Caco-2 (cell line): ENCODE measurements at regions of chr17 and their contacts with region 1.

Region 1: GRCh38 chr17:16363749-16364536 is 10.7 kb upstream of the CENPV start:
- DNase-seq: peak; percentile 75 to 76
- H3K4me3 ChIP-seq: no peak overlapping the region
- H3K4me3 Mint-ChIP-seq: no peak overlapping the region
- H3K27ac Mint-ChIP-seq: no peak overlapping the region
- H3K4me1 ChIP-seq: 0 out of 2 replicates have a peak, but pooled peaks cover 4% of the 10 kb centered on the region
- H3K4me1 Mint-ChIP-seq: no peaks in the 10 kb centered on the region
- H3K27me3 ChIP-seq: no peaks in the 10 kb centered on the region
- H3K27me3 Mint-ChIP-seq: no peaks in the 10 kb centered on the region
- CTCF ChIP-seq: peak; percentile 93 to 95

Region 2: DNA sequence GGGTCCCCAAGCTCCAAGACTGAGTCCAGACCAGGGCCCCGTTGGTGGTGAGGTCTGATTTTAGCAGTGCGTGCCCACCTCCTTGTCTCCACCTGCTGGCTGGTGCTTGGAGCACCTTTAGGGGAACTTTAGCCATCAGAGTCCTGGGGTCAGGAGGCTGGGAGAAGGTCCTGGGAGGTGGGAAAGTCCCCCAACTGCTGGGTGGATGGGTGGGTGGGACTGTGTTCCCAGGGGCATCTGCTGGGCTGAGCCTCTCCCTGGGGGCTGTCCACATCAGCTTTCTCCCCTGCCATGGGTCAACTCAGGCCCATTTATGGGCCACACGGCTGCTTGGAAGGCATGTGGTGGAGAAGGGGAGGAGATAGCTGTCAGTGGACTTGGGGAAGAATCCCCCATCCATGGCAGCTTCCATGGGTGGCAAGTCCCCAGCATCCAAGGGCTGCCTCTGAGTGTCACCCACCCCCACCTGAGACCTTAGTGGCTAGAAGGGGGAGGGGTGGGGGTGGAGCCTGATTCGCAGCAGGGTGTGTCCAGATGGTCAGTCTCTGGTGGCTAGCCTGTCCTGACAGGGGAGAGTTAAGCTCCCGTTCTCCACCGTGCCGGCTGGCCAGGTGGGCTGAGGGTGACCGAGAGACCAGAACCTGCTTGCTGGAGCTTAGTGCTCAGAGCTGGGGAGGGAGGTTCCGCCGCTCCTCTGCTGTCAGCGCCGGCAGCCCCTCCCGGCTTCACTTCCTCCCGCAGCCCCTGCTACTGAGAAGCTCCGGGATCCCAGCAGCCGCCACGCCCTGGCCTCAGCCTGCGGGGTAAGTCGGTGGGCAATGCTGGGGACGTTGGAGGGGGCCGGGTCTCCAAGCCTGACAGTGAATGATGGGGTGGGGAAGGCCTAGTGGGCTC is 51.3 kb after region 1 on chr17 and contains the start of gene TRPV2:
- CTCF ChIA-PET with region 1: interaction called, 8 read pairs
- POLR2A ChIA-PET with region 1: no interaction called
- intact Hi-C with region 1: loop called (anchors 2 kb)
- DNase-seq: peak; percentile 58 to 62
- H3K4me3 ChIP-seq: no peak within 1 kb of the TSS
- H3K4me3 Mint-ChIP-seq: no peak within 1 kb of the TSS
- H3K27ac Mint-ChIP-seq: no peak within 1 kb of the TSS
- H3K4me1 ChIP-seq: peaks cover 10% of the 10 kb centered on the region
- H3K4me1 Mint-ChIP-seq: no peaks in the 10 kb centered on the region
- H3K27me3 ChIP-seq: no peaks in the 10 kb centered on the region; the same call in 1 of the 2 replicates
- H3K27me3 Mint-ChIP-seq: no peaks in the 10 kb centered on the region
- CTCF ChIP-seq: peak; percentile 49 to 63
- total RNA-seq, gene TRPV2: 0.28 and 0.41 TPM in 2 replicates